MCF 10A (cell line): ENCODE measurements at regions of chr12 and their contacts with region 1.

Region 1: GRCh38 chr12:98418357-98419075 is 96.9 kb upstream of the TMPO start:
- DNase-seq: peak; percentile 95
- H3K4me3 Mint-ChIP-seq: peak overlapping the region; percentile 51
- H3K27ac Mint-ChIP-seq: peak overlapping the region; percentile 79
- H3K4me1 Mint-ChIP-seq: peaks cover 33% of the 10 kb centered on the region
- H3K27me3 Mint-ChIP-seq: no peaks in the 10 kb centered on the region
- CTCF ChIP-seq: no peak

Region 2: GRCh38 chr12:98109266-98109665 is 309.2 kb before region 1 on chr12:
- CTCF ChIA-PET with region 1: no interaction called
- POLR2A ChIA-PET with region 1: no interaction called
- intact Hi-C with region 1: no loop called
- DNase-seq: no peak
- H3K4me3 Mint-ChIP-seq: no peak overlapping the region
- H3K27ac Mint-ChIP-seq: no peak overlapping the region
- H3K4me1 Mint-ChIP-seq: no peaks in the 10 kb centered on the region
- H3K27me3 Mint-ChIP-seq: no peaks in the 10 kb centered on the region
- CTCF ChIP-seq: no peak

Region 3: DNA sequence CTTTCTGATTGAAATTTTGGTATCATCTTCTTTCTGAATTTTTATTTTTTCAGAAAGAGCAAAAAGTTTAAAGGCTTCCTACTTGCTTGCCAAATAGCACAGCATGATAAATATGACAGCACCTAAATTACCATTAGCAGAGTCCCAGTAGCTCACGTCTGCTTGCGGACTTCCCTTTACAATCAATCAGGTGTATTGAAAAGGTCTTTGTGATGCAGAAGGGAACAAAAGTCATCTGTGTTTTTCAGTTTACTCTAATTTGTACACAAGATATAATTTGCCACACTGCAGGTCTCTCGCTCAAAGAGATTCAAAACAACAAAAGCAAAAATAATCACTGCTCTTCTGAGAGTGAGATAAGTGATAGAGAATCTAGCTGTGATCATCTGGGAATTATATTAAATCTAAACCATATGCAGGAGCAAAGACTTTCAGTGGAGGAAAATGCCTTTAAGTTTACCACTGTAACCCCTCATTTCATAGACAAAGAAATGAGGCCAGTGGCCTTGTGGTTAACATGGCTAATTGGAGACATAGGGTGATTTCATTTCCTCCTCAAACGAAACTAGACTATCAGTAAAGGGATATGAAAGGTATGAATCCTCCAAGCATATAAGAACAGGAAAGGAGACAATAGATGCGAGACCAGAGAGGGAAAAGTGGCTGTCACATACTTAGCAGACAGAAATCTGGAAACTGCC is 143.9 kb before region 1 on chr12:
- CTCF ChIA-PET with region 1: no interaction called
- POLR2A ChIA-PET with region 1: no interaction called
- intact Hi-C with region 1: no loop called
- DNase-seq: no peak
- H3K4me3 Mint-ChIP-seq: no peak overlapping the region
- H3K27ac Mint-ChIP-seq: no peak overlapping the region
- H3K4me1 Mint-ChIP-seq: no peaks in the 10 kb centered on the region
- H3K27me3 Mint-ChIP-seq: peaks cover 74% of the 10 kb centered on the region
- CTCF ChIP-seq: no peak

Region 4: DNA sequence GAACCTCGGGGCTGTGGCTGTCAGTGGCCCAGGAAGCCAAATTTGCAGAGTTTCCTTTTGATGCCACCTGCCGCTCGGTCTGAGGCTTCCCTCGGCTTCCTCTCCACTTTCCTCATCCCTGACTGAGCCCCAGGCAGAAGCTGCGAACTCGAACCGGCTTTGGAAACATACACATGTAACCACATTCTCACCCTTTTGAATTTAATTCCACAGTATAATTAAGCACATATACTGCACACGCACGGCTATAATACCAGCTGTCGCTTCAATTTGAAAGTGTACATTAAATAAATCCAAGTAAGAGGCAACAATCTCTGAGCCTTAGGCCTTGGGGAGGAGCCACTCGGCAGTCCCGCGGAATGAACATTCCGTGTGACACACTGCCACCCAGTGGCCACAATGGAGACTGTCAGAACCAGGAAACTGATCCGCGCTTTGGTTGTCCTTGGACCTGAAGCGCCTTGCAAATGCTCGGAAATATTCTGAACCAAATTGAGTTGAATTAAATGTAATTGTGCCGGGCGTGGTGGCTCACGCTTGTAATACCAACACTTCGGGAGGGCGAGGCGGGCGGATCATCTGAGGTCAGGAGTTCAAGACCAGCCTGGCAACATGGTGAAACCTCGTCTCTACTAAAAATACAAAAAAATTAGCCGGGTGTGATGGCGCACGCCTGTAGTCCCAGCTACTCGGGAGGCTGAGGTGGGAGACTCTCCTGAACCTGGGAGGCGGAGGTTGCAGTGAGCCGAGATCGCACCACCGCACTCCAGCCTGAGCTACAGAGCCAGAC is 21.0 kb before region 1 on chr12:
- CTCF ChIA-PET with region 1: interaction called, 12 read pairs
- POLR2A ChIA-PET with region 1: no interaction called
- intact Hi-C with region 1: no loop called
- DNase-seq: peak; percentile 82
- H3K4me3 Mint-ChIP-seq: peak overlapping the region; percentile 74
- H3K27ac Mint-ChIP-seq: peak overlapping the region; percentile 29
- H3K4me1 Mint-ChIP-seq: peaks cover 19% of the 10 kb centered on the region
- H3K27me3 Mint-ChIP-seq: peaks cover 6% of the 10 kb centered on the region
- CTCF ChIP-seq: peak; percentile 85

Region 5: DNA sequence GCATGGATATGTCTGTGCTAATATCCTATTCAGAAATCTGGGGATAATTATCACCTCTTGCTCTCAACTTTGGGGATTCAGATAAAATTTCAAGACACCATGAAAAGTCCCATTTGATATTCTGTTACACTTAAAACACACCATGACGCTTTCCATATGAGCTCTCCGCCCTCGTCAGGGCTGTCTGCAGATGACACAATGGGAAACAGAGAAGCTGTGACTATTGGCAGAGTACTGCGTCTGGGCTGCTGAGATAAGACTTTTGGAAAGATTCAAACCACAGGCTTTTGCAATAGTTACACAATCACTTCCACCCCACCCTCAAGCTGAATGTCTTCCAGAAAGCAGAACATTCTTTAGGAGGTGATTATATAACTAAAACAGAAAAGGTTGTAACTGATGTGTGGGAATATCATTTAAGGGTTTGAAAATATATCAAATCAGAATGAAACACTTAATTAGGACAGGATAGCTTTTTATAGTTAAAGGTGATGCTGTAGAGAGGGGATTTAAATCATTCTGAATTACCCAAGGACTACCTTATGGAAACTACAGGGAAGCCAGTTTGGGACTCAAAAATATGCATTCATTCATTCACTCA is 21.6 kb after region 1 on chr12:
- CTCF ChIA-PET with region 1: interaction called, 52 read pairs
- POLR2A ChIA-PET with region 1: interaction called, 10 read pairs
- intact Hi-C with region 1: no loop called
- DNase-seq: peak; percentile 96
- H3K4me3 Mint-ChIP-seq: peak overlapping the region; percentile 39
- H3K27ac Mint-ChIP-seq: peak overlapping the region; percentile 19
- H3K4me1 Mint-ChIP-seq: peaks cover 10% of the 10 kb centered on the region
- H3K27me3 Mint-ChIP-seq: no peaks in the 10 kb centered on the region
- CTCF ChIP-seq: no peak

Region 6: DNA sequence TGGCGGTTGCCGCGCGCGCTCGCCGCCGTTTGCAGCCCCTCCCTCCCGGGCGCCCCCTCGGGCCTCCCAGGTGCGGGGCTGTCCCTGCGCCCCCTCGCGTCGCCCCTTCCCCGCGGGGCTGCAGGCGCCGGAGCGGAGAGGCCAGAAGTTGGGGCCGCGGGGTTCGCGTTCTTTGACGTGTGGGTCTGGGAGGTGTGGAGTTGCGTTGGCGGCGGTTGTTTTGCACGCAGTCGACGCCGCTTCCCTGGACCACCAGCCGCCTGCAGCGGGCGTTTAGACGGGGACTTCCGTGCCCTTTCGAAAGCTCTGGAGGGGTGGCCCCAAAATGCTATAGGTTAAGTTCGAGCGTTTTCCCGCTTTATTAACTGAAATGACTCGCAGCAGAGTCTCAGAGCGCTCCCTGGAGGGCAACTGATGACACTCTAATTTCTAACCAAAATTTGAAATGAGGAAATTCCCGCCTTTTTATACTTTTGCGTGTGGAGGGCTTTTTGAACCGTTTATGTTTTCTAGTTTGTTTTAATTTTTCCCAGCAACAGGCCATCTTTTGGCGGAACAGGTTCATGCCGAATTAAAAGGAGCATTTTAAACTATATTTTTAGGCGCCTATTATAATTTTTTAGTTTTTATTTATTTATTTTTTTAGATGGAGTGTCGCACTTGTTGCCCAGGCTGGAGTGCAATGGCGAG is 97.8 kb after region 1 on chr12:
- CTCF ChIA-PET with region 1: interaction called, 9 read pairs
- POLR2A ChIA-PET with region 1: interaction called, 25 read pairs
- intact Hi-C with region 1: no loop called
- DNase-seq: peak; percentile 93
- H3K4me3 Mint-ChIP-seq: peak overlapping the region; percentile 96
- H3K27ac Mint-ChIP-seq: peak overlapping the region; percentile 61
- H3K4me1 Mint-ChIP-seq: peaks cover 20% of the 10 kb centered on the region
- H3K27me3 Mint-ChIP-seq: no peaks in the 10 kb centered on the region
- CTCF ChIP-seq: peak; percentile 78

Region 7: DNA sequence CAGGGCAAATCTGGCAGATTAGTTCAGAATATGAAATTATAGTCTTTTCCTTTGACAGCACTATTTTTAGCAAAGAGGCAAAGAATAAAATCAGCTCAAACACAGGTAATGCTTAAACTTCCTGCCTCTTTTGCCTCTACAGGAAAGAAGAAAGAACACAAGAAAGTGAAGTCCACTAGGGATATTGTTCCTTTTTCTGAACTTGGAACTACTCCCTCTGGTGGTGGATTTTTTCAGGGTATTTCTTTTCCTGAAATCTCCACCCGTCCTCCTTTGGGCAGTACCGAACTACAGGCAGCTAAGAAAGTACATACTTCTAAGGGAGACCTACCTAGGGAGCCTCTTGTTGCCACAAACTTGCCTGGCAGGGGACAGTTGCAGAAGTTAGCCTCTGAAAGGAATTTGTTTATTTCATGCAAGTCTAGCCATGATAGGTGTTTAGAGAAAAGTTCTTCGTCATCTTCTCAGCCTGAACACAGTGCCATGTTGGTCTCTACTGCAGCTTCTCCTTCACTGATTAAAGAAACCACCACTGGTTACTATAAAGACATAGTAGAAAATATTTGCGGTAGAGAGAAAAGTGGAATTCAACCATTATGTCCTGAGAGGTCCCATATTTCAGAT is 114.3 kb after region 1 on chr12:
- CTCF ChIA-PET with region 1: interaction called, 19 read pairs
- POLR2A ChIA-PET with region 1: no interaction called
- intact Hi-C with region 1: loop called (anchors 2 kb)
- DNase-seq: peak; percentile 70
- H3K4me3 Mint-ChIP-seq: no peak overlapping the region
- H3K27ac Mint-ChIP-seq: no peak overlapping the region
- H3K4me1 Mint-ChIP-seq: no peaks in the 10 kb centered on the region
- H3K27me3 Mint-ChIP-seq: no peaks in the 10 kb centered on the region
- CTCF ChIP-seq: peak; percentile 62

Region 8: GRCh38 chr12:98653866-98654493 is 235.5 kb after region 1 on chr12:
- CTCF ChIA-PET with region 1: interaction called, 4 read pairs
- POLR2A ChIA-PET with region 1: no interaction called
- intact Hi-C with region 1: loop called (anchors 2 kb)
- DNase-seq: peak; percentile 73
- H3K4me3 Mint-ChIP-seq: no peak overlapping the region
- H3K27ac Mint-ChIP-seq: no peak overlapping the region
- H3K4me1 Mint-ChIP-seq: peaks cover 8% of the 10 kb centered on the region
- H3K27me3 Mint-ChIP-seq: no peaks in the 10 kb centered on the region
- CTCF ChIP-seq: peak; percentile 79